Head of caudate nucleus (tissue), 42 donors: ENCODE measurements at regions of chr9 and their contacts with region 1.

Region 1: DNA sequence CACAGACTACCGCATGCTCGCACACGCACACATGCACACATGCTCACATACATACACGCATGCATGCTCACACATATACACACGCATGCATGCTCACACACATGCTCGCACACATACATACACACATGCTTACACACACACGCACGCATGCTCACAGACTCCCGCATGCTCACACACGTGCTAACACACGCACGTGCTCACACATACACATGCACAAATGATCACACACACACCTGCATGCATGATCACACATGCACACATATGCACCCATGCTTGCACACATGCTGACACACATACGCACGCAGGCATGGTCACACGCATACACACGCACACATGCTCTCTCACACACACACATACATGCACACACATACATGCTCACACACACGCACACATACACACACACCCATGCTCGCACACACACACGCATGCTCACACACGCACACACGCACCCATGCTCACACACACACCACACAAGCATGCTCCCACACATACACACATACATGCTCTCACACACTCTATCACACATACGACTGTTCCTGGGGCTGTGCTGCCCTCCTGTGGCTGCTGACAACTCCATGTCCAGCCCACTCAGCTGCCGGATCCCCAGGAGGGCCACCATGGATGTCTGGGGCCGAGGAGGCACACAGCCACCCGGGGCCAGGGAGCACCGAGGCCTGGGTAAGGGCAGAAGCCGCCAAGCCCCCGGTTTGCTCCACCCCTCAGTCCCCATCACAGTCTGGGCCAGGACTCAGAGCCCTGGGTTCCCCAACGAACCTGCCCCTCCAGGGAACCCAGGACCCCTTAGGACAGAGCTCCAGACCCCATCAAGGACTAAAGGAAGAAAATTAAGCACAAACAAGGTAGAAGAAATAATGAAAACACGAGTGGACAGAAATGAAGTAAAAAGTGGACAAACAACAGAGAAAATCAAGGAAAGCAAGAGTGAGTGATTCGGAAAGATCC is 31.4 kb upstream of the EGFL7 start:
- DNase-seq: peak; percentile 48 to 89 (median 76)

Region 2: DNA sequence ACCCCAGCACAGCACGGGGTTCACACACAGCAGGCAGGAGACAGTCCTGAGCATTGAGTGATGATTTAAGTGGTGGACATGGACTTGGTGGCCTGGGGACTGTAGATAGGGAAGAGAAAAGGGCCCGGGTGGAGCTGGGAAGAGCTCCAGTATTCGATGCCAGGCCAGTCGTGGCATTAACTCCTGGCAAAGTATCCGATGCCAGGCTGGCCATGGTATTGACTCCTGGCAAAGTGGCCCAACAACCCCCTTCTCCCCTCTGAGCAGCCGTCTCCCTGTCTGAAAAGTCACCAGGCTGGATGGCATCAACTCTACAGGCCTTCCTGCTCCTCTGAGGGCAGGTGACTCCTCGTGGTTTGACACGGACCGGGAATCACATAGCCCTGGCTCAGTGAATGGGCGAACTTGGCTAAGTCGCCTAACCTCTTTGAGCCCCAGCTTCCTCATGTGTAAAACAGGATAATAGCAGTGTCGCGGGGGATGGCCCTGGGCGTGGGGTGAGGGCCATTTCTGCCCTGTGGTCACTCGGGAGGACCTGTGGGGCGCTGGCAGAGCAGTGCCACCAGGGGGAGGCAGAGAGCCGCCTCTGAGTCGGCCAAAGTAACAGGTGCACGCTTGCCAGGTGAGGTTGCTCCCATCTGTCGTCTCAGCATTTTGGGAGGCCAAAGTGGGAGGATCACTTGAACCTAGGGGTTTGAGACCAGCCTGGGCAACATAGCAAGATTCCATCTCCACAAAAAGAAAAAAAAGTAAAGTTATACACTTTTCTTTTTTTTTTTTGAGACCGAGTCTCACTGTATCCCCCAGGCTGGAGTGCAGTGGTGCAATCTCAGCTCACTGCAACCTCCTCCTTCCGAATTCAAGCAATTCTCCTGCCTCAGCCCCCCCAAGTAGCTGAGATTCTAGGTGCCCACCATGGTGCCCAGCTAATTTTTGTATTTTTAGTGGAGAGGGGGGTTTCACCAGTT is 142.8 kb before region 1 on chr9:
- intact Hi-C with region 1: loop called (anchors 2 kb)
- DNase-seq: peak in 41 of 42 donors; percentile 59 to 89 (median 77)

Region 3: DNA sequence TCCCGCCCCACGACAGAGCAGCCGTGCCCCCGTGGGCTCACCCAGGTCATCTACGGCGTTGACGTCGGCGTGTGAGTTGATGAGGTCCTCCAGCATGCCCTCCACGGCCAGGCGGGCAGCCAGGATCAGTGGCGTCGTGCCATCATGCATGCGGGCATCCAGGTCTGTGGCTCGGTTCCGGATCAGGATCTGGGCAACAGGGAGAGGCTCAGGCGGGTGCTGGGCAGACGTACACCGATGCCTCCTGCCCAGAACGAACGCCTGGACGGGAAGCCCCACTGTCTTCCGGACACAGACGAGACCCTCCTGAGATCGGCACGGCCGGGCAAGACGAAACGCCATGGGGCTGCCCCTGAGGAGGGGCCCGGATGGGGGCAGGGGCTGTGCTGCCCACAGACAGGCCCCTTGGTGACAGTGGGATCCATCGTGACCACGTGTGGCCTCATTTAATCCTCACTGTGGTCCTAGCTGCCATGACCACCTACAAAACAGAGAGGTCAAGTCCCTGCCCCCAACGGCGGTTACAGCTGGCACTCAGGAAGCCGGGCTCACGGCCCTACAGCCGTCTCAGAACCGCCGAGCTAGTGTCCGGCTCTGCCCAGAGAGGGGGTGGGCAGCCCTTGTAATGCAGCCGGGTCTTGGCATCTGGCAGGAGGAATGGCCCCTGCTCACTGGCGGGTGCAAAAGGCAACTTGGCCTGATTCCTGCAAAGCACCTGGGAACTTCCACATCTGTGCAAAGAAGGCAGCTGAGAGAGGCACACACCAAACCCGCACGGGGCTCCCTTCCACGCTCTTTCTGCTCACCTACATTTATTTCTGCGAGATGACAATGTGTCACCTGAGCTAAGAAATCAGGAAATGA is 132.0 kb before region 1 on chr9:
- intact Hi-C with region 1: no loop called
- DNase-seq: peak in 1 of 42 donors; percentile 37